Ascending aorta (tissue), 2 donors: ENCODE measurements at regions of chr5 and their contacts with region 1.

Region 1: GRCh38 chr5:126536874-126537273 is 58.1 kb downstream of the ALDH7A1 start:
- DNase-seq: no peak
- H3K4me3 ChIP-seq: no peak overlapping the region
- H3K27ac ChIP-seq: no peak overlapping the region
- H3K4me1 ChIP-seq: peaks cover 0 to 12% of the 10 kb centered on the region in 2 donors
- H3K27me3 ChIP-seq: no peaks in the 10 kb centered on the region
- CTCF ChIP-seq: peak in 1 of 3 experiments; percentile 9

Region 2: DNA sequence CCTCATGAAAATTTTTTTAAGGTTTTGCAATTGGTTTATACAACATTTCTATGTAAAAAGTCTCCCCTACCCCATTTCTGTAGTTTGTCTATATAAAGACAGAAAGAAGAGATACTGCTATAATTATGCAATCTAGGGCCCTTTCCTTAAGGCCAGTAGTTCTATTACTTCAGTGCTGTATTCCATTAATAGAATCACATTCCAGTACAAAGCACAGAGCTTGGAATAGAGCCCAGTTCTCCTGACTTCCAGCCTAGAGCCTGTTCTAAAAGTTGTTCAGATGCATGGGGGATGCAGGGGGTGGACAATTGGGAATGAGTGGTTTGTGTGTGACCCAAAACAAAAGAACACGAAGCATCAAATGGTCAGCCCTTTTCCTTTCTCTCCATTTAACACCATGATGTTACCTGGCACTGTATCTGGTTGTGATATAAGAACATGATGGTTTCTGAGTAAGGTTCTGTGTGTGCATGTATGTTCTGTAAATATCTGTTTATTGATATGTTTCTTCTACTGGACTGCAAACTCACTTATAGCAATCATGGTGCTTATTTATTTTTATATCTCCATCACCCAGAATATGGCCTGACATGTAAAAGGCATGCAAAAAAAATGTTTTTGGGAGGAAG is 121.9 kb before region 1 on chr5:
- intact Hi-C with region 1: loop called (anchors 5 kb)
- DNase-seq: peak in 1 of 2 donors; percentile 82
- H3K4me3 ChIP-seq: peak overlapping the region in 1 of 2 donors; percentile 33
- H3K27ac ChIP-seq: peak overlapping the region; percentile 77 to 78
- H3K4me1 ChIP-seq: peaks cover 13 to 33% of the 10 kb centered on the region in 2 donors
- H3K27me3 ChIP-seq: no peaks in the 10 kb centered on the region
- CTCF ChIP-seq: no peak

Region 3: GRCh38 chr5:126490167-126490940 is 46.5 kb before region 1 on chr5:
- intact Hi-C with region 1: loop called (anchors 5 kb)
- DNase-seq: no peak
- H3K4me3 ChIP-seq: no peak overlapping the region
- H3K27ac ChIP-seq: peak overlapping the region; percentile 63 to 65
- H3K4me1 ChIP-seq: peaks cover 5 to 19% of the 10 kb centered on the region in 2 donors
- H3K27me3 ChIP-seq: no peaks in the 10 kb centered on the region
- CTCF ChIP-seq: no peak

Region 4: GRCh38 chr5:126600631-126601511 is 64.0 kb after region 1 on chr5 and contains the start of gene PHAX:
- intact Hi-C with region 1: loop called (anchors 5 kb)
- DNase-seq: peak; percentile 18 to 85
- H3K4me3 ChIP-seq: peak within 1 kb of the TSS; percentile 76 to 87
- H3K27ac ChIP-seq: peak within 1 kb of the TSS; percentile 75 to 80
- H3K4me1 ChIP-seq: peaks cover 0 to 12% of the 10 kb centered on the region in 2 donors
- H3K27me3 ChIP-seq: no peaks in the 10 kb centered on the region
- CTCF ChIP-seq: peak; percentile 46 to 82 (median 74)
- total RNA-seq, gene PHAX: 19.3 TPM

Region 5: GRCh38 chr5:126736141-126736540 is 199.3 kb after region 1 on chr5:
- intact Hi-C with region 1: no loop called
- DNase-seq: no peak
- H3K4me3 ChIP-seq: no peak overlapping the region
- H3K27ac ChIP-seq: no peak overlapping the region
- H3K4me1 ChIP-seq: no peaks in the 10 kb centered on the region
- H3K27me3 ChIP-seq: no peaks in the 10 kb centered on the region
- CTCF ChIP-seq: no peak